ENCODE measurements at regions of chr5 and their contacts with region 1.

Region 1: GRCh38 chr5:160439205-160439600 is 17.5 kb downstream of the PTTG1 start:
- DNase-seq: peak; percentile 94
- ATAC-seq: peak; percentile 95

Region 2: GRCh38 chr5:160460377-160461049 is 21.3 kb after region 1 on chr5:
- intact Hi-C with region 1: loop called (anchors 1 kb)
- DNase-seq: no peak
- ATAC-seq: no peak

Region 3: DNA sequence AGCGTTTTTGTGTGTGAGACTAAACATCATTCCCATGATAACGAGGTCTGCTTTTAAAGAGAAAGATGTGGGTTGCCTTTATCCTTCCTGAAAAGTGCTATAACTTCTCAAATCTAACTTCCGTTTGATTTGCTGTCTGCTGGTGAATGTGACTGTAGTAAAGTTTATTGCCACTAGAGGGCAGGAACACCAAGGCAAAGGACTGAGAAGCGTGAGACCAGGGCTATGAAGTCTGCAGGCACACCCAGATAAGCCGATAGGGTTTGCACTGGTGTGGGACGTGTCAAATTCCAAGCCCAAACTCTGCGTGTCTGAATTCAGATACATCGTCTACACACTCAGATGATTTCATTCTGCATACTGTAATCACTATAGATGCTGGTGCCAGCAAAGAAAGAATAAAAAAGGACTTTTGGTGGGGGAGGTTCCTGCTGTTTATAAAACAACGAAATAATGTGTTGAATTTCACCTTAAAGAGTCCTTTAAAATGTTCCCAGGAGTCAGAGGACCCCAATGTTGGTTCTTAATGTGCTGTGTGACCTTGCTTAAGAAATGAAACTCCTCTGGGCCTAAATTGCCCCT is 69.7 kb after region 1 on chr5:
- intact Hi-C with region 1: loop called (anchors 10 kb)
- DNase-seq: no peak
- ATAC-seq: peak; percentile 85